Activated CD4-positive, alpha-beta memory T cell treated with anti-CD3 and anti-CD28 coated beads for 36 hours (primary cell): ENCODE measurements at regions of chr5 and their contacts with region 1.

Region 1: GRCh38 chr5:142826741-142827732 is 56.9 kb downstream of the ARHGAP26 start:
- DNase-seq: peak; percentile 73
- H3K4me3 Mint-ChIP-seq: no peak overlapping the region
- H3K27ac Mint-ChIP-seq: peak overlapping the region; percentile 55
- H3K4me1 Mint-ChIP-seq: peaks cover 64% of the 10 kb centered on the region
- H3K27me3 Mint-ChIP-seq: no peaks in the 10 kb centered on the region

Region 2: GRCh38 chr5:142783601-142784341 is 43.3 kb before region 1 on chr5:
- CTCF ChIA-PET with region 1: interaction called, 5 read pairs
- POLR2A ChIA-PET with region 1: interaction called, 22 read pairs
- intact Hi-C with region 1: loop called (anchors 1 kb)
- DNase-seq: peak; percentile 90
- H3K4me3 Mint-ChIP-seq: peak overlapping the region; percentile 34
- H3K27ac Mint-ChIP-seq: peak overlapping the region; percentile 85
- H3K4me1 Mint-ChIP-seq: peaks cover 56% of the 10 kb centered on the region
- H3K27me3 Mint-ChIP-seq: no peaks in the 10 kb centered on the region

Region 3: GRCh38 chr5:142807372-142807911 is 19.6 kb before region 1 on chr5:
- CTCF ChIA-PET with region 1: no interaction called
- POLR2A ChIA-PET with region 1: no interaction called
- intact Hi-C with region 1: no loop called
- DNase-seq: no peak
- H3K4me3 Mint-ChIP-seq: no peak overlapping the region
- H3K27ac Mint-ChIP-seq: no peak overlapping the region
- H3K4me1 Mint-ChIP-seq: peaks cover under 1% of the 10 kb centered on the region
- H3K27me3 Mint-ChIP-seq: no peaks in the 10 kb centered on the region